ENCODE measurements at regions of chrX and their contacts with region 1.

Region 1: GRCh38 chrX:15471016-15471415 is 22.1 kb downstream of the PIR start:
- DNase-seq: peak; percentile 68
- H3K4me3 ChIP-seq: no peak overlapping the region
- H3K27ac ChIP-seq: peak overlapping the region; percentile 40
- H3K4me1 ChIP-seq: peaks cover 33% of the 10 kb centered on the region
- H3K27me3 ChIP-seq: no peaks in the 10 kb centered on the region
- CTCF ChIP-seq: peak; percentile 89 to 90

Region 2: DNA sequence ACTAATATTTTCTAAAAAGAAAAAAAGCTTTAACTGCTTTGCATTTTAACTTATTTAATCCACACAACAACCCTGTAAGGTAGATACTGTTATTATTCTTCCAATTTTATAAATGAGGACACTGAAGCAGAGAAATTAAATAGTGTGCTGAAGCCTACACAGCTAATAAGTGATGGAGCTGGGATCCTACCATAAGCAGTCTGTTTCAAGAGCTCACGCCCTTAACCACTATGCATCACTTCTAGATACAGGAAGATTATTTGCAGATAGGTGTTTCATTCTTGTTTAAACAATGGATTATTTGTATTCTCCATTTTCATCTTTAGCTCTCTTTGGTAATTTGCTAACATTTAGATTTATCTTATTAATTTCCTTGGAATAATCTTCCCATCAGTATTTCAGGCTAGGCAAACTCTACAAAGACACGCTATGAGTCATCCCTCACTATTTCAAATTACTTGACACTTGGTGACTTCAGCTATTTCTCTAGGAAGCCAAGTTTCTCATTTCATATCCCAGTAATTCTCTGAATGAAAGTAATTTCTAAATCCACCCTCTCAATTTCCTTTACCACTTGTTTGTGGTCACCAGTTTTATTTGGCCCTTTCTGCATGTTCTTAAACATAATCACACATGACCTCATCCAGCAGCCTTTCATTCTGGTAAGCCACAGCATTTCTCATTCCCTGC is 268.4 kb before region 1 on chrX:
- CTCF ChIA-PET with region 1: no interaction called
- dilution Hi-C with region 1: no loop called
- in situ Hi-C with region 1: no loop called
- intact Hi-C with region 1: no loop called
- DNase-seq: peak; percentile 68
- H3K4me3 ChIP-seq: no peak overlapping the region
- H3K27ac ChIP-seq: no peak overlapping the region
- H3K4me1 ChIP-seq: no peaks in the 10 kb centered on the region
- H3K27me3 ChIP-seq: no peaks in the 10 kb centered on the region
- CTCF ChIP-seq: no peak

Region 3: DNA sequence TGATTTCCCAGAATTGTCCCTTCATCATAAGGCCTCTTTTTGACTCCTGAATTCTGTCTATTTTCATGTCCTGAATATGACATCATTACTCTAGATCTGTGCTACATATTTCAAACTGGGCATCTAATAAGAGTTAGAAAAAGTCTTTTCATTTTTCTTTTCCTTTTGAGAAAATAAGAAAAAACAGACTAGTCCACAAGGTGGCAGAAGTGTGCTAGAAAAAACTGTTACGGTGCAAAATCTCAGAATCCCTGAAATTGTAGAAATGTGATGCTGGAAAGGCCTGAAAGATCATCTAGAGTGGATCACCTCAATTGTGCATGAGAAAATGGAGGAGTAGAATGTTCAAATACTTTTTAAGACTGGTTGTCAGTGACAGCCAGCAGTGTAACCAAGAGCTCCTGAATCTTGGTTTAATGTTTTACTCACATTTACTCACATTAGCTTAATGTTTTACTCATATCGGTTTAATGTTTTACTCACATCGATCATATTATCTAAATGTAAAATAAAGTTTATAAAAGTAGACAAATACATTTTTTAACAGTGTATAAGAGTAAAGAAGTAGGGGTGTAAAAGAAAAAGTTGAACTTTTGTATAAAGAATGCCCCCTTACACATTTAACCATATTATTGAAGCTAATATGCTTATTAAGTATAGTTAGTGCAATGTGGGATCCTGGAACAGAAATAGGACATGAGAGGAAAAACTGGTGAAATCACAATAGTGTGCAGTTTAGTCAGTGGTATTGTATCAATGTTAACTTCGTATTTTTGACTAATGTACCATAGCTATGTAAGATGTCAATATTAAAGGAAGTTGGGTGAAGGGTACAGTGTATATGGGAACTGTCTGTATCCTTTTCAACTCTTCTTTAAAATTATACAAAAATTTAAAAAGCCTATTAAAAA is 170.8 kb before region 1 on chrX:
- CTCF ChIA-PET with region 1: no interaction called
- dilution Hi-C with region 1: no loop called
- in situ Hi-C with region 1: no loop called
- intact Hi-C with region 1: loop called (anchors 1 kb)
- DNase-seq: no peak
- H3K4me3 ChIP-seq: no peak overlapping the region
- H3K27ac ChIP-seq: no peak overlapping the region
- H3K4me1 ChIP-seq: no peaks in the 10 kb centered on the region
- H3K27me3 ChIP-seq: no peaks in the 10 kb centered on the region
- CTCF ChIP-seq: peak; percentile 53 to 57

Region 4: DNA sequence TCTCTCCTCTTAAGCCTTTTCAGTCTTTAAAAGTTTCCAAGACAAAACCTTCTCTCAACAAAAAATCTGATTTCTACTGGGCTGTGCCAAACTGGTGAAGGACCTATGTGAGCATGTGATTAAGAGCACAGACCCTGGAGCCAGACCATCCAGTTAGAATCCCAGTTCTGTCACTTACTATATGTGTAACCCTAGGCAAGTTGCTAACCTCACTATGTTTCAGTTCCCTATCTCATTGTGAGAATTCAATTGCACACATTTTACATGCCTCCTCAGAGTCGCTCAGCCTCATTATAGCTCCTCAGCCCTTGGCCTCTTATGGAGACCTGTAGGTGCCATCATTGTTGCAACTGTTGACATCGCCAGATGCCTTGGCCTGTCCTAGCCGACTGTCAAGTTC is 32.7 kb before region 1 on chrX:
- CTCF ChIA-PET with region 1: interaction called, 11 read pairs
- dilution Hi-C with region 1: no loop called
- in situ Hi-C with region 1: no loop called
- intact Hi-C with region 1: no loop called
- DNase-seq: no peak
- H3K4me3 ChIP-seq: no peak overlapping the region
- H3K27ac ChIP-seq: no peak overlapping the region
- H3K4me1 ChIP-seq: no peaks in the 10 kb centered on the region
- H3K27me3 ChIP-seq: no peaks in the 10 kb centered on the region
- CTCF ChIP-seq: no peak

Region 5: DNA sequence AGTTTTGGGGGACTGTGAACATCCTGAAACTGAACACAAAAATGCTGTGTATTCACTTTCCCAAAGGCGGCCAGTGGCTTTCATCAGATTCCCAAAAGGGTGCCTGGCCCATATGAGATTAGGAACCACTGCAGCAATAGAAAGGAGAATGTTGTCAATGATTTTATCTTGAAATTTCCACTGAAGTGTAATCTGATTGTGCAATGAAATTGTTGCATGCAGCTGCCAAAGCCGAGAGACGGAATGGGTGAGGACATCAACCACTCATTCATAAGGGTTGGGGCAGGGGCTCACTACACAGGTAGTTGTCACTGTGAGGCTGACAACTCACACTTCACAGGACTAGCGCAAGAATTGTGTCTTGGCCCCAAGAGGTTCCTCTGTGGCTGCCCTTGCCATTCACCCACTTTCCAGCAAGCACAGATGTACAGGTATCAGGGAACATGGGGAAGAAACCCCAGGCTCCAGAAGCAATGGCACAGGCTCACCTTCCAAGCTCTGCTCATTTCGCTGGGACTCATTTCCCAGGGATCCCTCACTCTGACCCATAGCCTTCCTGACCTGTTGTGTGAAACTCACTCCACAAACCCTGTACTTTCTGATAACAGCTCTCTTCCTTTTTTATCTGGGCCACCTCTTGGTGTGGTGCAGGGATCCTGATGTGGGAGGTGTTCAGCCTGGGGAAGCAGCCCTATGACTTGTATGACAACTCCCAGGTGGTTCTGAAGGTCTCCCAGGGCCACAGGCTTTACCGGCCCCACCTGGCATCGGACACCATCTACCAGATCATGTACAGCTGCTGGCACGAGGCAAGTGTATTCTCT is 78.4 kb after region 1 on chrX:
- CTCF ChIA-PET with region 1: no interaction called
- dilution Hi-C with region 1: loop called (anchors 5 kb)
- in situ Hi-C with region 1: no loop called
- intact Hi-C with region 1: no loop called
- DNase-seq: no peak
- H3K4me3 ChIP-seq: no peak overlapping the region
- H3K27ac ChIP-seq: no peak overlapping the region
- H3K4me1 ChIP-seq: no peaks in the 10 kb centered on the region
- H3K27me3 ChIP-seq: no peaks in the 10 kb centered on the region
- CTCF ChIP-seq: no peak

Region 6: DNA sequence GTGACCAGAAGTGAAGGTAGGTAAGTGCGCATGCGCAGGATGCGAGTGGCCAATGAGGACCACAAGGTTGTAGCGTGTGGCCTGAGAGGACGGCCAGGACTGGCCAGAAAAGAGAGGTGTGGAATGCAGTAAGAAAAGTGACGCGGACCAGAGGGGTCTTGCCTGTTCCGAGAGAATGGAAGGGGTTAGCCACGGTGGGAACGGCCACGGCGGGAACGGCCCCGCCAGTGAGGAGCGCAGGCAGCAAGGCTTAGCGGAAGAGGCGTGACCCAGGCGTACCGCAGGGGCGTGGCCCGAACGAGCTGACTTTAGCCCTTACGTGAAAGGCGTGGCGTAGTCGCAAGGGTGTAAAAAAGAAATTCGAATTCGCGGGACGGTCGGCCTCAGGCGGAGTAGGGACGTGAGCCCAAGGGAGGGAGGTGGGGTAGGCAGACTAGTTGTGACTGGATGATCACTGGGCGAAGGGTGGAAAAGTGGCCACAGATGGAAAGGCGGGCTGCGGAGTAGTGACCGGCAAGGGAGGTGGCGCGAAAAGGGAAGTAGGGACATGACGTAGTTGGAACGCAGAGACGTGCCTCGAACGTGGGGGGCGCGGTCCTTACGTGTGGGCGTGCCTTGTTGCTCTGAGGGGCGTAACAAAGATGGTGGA is 203.9 kb after region 1 on chrX:
- CTCF ChIA-PET with region 1: no interaction called
- dilution Hi-C with region 1: no loop called
- in situ Hi-C with region 1: loop called in 1 of 2 experiments (anchors 25 kb)
- intact Hi-C with region 1: loop called (anchors 2 kb)
- DNase-seq: peak; percentile 97
- H3K4me3 ChIP-seq: peak overlapping the region; percentile 59 to 90 (median 82)
- H3K27ac ChIP-seq: peak overlapping the region; percentile 97
- H3K4me1 ChIP-seq: peaks cover 20% of the 10 kb centered on the region
- H3K27me3 ChIP-seq: no peaks in the 10 kb centered on the region
- CTCF ChIP-seq: no peak